ENCODE measurements at regions of chr2 and their contacts with region 1.

Region 1: DNA sequence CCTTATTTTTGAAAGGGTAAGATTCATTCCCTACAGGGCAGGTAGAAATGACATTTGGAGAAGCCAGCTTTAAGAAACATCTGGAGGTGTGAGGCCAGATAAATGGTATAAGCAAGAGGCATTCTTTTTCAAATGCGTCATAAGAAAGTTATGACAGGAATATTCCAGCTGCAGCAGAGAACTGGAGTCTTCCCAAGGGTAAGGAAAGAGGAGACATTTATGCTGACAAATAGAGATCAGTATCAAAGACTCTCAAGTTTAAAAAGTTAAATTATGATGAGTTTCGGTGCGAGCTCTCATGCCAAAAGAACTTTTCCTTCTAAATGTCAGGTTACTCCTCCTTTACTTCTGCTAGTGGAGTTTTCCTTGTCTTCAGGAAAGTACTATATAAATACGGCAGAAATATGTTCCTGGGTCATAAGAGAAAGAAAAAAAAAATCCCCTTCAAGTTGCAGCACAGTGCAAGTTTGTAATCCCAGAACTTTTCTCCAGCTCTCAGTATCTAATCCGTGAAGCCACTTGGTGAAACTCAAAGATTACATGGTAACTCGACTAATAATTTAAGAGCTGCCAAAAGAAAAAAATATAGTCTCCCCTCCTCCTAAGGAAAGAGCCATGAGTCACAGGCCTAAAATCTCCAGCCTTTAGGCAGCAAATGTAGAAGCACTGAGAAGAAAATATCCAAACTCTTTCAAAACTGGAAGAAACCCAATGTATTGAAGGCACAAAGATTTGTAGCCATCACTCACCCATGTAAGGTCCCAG is 428.1 kb downstream of the MEIS1 start:
- DNase-seq: no peak
- H3K4me3 ChIP-seq: no peak overlapping the region
- H3K27ac ChIP-seq: no peak overlapping the region
- H3K4me1 ChIP-seq: no peaks in the 10 kb centered on the region
- H3K27me3 ChIP-seq: no peaks in the 10 kb centered on the region
- CTCF ChIP-seq: no peak

Region 2: GRCh38 chr2:66840321-66841002 is 22.6 kb before region 1 on chr2:
- CTCF ChIA-PET with region 1: no interaction called
- POLR2A ChIA-PET with region 1: interaction called, 10 read pairs
- intact Hi-C with region 1: no loop called
- DNase-seq: no peak
- H3K4me3 ChIP-seq: no peak overlapping the region
- H3K27ac ChIP-seq: peak overlapping the region; percentile 79
- H3K4me1 ChIP-seq: peaks cover 19% of the 10 kb centered on the region
- H3K27me3 ChIP-seq: no peaks in the 10 kb centered on the region
- CTCF ChIP-seq: no peak